PC-9 (cell line): ENCODE measurements at regions of chr6 and their contacts with region 1.

Region 1: DNA sequence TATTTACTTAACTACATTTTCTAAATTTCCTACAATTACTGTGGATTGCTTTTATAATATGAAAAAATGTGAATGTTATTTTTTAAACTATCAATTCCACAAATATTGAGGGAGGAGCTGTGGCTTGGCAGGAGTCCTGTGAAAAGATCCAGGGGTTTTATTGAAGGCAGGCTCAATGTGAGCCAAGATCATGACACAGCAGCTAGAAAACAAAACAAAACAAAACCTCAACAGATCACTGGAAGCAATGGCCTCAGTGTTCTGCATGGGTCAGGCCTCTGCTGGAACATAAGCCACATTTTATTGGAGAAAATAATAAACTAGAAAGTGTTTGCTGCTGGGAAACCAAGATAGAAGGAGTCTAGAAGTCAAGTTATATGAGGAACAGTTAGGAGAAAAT is 19.4 kb upstream of the RCAN2 start:
- DNase-seq: no peak
- H3K4me3 ChIP-seq: no peak overlapping the region
- H3K27ac ChIP-seq: no peak overlapping the region
- H3K4me1 ChIP-seq: no peaks in the 10 kb centered on the region
- H3K27me3 ChIP-seq: no peaks in the 10 kb centered on the region
- CTCF ChIP-seq: no peak

Region 2: GRCh38 chr6:46263707-46264086 is 247.0 kb before region 1 on chr6:
- CTCF ChIA-PET with region 1: no interaction called
- POLR2A ChIA-PET with region 1: no interaction called
- intact Hi-C with region 1: no loop called
- DNase-seq: peak in 1 of 2 experiments; percentile 41
- H3K4me3 ChIP-seq: no peak overlapping the region
- H3K27ac ChIP-seq: no peak overlapping the region
- H3K4me1 ChIP-seq: no peaks in the 10 kb centered on the region
- H3K27me3 ChIP-seq: no peaks in the 10 kb centered on the region
- CTCF ChIP-seq: no peak

Region 3: DNA sequence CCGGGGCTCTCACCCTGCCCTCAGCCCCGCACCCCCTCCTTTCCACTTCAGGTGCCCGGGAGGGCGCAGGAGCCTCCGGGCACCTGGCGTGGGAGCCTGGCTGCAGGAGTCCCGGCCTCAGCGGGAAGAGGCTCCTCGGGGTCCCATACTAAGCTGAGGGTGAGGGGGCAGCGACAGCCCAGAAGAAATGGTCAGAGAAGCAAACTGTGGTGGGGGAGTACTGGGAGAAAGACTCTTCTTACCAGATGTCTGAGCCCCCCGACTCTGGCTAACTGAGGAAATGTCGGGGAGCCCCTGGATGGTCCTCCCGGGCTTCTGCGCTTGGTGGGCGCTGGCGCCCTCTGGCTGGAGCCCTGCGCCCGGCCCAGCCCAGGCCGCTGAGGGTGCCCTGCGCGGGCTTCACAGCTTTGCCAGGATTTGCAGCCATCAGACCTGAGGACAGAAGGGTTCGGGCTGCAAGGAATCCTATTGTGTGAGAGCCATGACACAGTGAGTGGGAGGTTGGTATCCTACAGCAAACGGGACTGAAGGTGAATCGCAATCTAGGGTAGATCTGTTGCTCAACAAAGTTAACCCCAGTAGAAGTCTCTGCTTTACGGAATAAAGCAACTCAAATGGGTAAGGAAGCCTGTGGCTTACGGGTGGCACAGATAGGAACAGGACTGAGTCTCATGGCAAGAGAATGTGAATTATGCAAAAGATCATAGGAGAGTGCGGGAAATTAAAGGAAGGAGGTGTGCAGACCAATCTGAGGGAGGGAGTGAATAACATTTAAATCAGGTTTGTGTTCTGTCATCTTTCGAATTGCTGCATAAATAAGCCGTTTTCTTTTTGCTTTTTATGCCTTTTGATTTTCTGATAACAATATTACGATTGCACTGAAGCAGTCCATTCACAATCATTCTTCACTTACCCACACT is 18.8 kb before region 1 on chr6:
- CTCF ChIA-PET with region 1: no interaction called
- POLR2A ChIA-PET with region 1: interaction called, 10 read pairs
- intact Hi-C with region 1: no loop called
- DNase-seq: peak; percentile 46 to 52
- H3K4me3 ChIP-seq: peak overlapping the region; percentile 75
- H3K27ac ChIP-seq: no peak overlapping the region
- H3K4me1 ChIP-seq: 0 out of 2 replicates have a peak, but pooled peaks cover 6% of the 10 kb centered on the region
- H3K27me3 ChIP-seq: peaks cover 24% of the 10 kb centered on the region
- CTCF ChIP-seq: peak; percentile 53

Region 4: GRCh38 chr6:48016020-48016755 is 1505.5 kb after region 1 on chr6:
- CTCF ChIA-PET with region 1: no interaction called
- POLR2A ChIA-PET with region 1: no interaction called
- intact Hi-C with region 1: no loop called
- DNase-seq: no peak
- H3K4me3 ChIP-seq: no peak overlapping the region
- H3K27ac ChIP-seq: no peak overlapping the region
- H3K4me1 ChIP-seq: no peaks in the 10 kb centered on the region
- H3K27me3 ChIP-seq: no peaks in the 10 kb centered on the region
- CTCF ChIP-seq: no peak